ENCODE measurements at regions of chr7 and their contacts with region 1.

Region 1: DNA sequence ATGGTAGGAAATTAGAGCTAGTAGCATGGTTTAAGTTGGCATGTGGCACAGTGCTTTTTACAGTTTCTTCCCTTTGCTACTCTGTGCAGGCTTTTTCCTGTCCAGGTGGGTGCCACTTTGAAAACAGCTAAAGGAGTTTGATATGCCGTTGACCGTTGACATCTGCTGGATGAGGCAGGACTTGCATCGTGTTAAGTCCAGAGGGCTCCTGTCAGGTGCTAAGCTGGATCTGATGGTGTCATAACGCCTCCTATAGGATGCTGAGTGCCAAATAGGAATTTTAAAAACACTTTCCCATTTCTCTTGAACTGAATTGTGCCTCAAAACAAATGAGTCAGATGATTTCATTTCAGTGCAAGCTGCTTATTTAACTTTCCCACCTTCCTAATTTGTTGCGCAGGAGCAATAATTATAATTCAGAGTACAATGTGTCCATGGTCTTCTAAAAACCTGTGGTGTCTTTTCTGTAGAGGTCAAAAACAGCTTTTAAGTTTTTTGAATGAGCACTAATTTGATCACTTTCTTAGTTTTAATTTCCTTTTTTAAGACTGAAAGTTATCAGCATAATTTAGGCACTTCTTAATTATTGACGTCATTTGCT is 178.3 kb downstream of the CDCA7L start:
- DNase-seq: peak; percentile 33
- CTCF ChIP-seq: peak; percentile 72

Region 2: DNA sequence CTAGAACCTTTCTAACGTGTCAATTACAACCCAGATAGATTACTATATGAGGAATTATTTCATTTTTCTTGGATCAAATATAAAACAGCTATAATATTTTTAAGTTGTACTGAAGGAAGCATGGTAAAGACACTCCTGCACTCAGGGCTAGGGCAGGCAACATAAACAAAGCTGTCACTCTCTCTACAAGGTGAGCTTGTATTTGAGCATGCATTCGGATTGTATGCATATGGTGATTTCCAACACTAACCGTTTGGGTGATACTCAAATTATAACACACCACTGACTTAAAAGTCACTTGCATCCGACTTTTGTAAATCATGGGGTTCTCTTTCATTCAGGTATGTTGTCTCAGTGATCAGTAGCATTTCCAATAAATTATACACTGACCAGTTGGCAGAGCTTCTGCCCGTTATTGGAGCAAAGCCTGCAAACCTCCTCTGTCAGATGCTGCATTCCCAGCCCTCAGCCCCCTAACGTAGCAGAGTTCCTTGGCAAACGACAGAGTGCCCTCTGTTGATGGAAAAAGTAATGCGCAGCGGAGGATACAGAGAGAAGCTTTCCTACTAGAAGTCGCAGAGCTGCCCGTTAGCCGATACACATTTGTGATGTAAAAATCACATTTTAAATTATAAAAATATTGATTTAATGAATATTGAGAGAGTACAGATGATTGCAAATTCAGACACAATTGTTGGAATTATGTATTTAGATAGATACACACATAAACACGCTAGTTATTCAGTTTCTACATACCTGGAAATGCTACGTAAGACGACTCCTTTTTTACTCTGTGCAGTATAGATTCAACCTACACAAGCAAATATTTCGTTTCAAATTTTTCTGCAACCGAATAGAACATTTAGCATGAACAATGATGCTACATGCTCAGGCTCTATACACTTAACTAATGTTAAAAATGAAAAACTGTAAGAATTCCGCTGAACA is 513.4 kb before region 1 on chr7:
- CTCF ChIA-PET with region 1: interaction called, 31 read pairs
- POLR2A ChIA-PET with region 1: no interaction called
- DNase-seq: peak; percentile 33
- CTCF ChIP-seq: peak; percentile 58

Region 3: DNA sequence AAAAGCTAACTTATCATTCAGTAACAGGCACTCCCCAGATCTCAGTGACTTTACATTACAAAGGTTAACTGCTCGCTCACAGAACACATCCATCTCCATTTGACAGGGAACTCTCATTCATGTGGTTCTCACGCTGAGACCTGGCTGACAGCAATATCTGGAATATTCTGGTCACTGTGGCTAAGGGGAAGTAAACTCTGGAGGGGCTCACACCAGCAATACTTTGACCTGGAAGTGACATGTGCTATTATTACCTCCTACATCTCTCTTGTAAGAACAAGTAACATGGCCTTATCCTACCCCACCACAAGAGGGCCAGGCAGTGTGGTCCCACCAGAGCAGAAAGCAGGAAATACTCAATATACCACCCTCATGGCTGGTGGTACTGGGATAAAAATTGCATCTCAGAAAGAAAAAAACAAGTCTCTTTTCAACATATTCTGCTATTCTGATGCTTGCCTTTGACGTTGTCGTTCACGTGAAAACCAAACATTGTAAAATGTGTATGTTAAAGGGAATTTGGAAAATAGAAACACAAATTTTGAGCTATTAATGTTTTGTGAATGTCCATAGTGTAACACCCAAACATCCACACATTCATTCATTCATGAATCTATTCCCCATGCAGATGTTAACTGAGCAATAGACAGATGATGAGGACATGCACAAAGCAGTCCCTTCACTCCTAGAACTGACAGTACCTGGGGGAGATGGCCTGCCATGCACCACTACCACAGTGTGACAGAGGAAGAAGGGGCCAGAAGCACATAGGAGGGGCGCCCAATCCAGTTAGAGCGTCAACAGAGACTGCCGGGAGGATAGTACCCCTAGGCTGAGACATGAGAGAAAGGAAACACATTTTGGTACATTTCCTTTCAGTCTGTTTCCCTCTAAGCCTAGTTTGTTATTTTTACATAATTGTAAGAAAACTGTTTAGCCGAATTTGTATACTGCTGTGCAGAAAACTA is 505.5 kb before region 1 on chr7:
- CTCF ChIA-PET with region 1: interaction called, 31 read pairs
- POLR2A ChIA-PET with region 1: no interaction called
- DNase-seq: peak; percentile 32
- CTCF ChIP-seq: peak; percentile 63

Region 4: GRCh38 chr7:21753071-21753470 is 14.3 kb before region 1 on chr7:
- CTCF ChIA-PET with region 1: interaction called, 17 read pairs
- POLR2A ChIA-PET with region 1: no interaction called
- DNase-seq: no peak
- CTCF ChIP-seq: no peak

Region 5: GRCh38 chr7:21777921-21778320 is 10.5 kb after region 1 on chr7:
- CTCF ChIA-PET with region 1: interaction called, 25 read pairs
- POLR2A ChIA-PET with region 1: no interaction called
- DNase-seq: no peak
- CTCF ChIP-seq: no peak